Activated T-helper 1 cell treated with anti-CD3 and anti-CD28 coated beads, Interleukin-12 subunit alpha, Interleukin-12 subunit beta, Interleukin-2, Interleukin-4 antibody, amounts not matched to agents 30 ng/mL and 10 ng/mL and 1 ng/mL, durations not matched to agents 14 hours and 24 hours and 36 hours (primary cell): ENCODE measurements at regions of chr10 and their contacts with region 1.

Region 1: GRCh38 chr10:103542764-103543616 is 49.5 kb downstream of the NEURL1 start:
- DNase-seq: peak; percentile 10
- H3K4me3 Mint-ChIP-seq: peak overlapping the region; percentile 51
- H3K27ac Mint-ChIP-seq: peak overlapping the region; percentile 58
- H3K4me1 Mint-ChIP-seq: peaks cover 15% of the 10 kb centered on the region
- H3K27me3 Mint-ChIP-seq: peaks cover 23% of the 10 kb centered on the region

Region 2: DNA sequence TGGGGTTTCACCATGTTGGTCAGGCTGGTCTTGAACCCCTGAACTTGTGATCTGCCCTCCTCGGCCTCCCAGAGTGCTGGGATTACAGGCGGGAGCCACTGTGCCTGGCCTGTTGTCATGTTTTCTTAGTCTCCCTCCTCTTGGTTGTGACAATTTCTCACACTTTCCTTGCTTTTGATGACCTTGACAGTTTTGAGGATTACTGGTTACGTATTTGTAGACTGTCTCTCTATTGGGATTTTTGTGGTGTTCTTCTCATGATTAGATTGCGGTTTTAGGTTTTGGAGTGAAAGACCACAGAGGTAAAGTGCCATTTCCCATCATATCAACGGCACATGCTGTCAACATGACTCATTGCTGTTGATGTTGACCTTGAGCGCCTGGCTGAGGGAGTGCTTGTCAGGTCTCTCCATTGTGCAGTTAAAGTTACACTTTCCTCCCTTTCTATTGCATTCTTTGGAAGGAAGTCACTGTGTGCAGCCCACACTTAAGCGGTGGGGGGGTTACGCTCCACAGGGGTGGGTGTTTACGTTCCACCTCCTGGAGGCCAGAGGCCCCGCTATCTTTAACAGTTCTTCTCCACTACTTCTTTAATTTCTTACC is 38.7 kb before region 1 on chr10:
- intact Hi-C with region 1: loop called (anchors 1 kb)
- DNase-seq: peak; percentile 56
- H3K4me3 Mint-ChIP-seq: peak overlapping the region; percentile 40
- H3K27ac Mint-ChIP-seq: peak overlapping the region; percentile 77
- H3K4me1 Mint-ChIP-seq: peaks cover 53% of the 10 kb centered on the region
- H3K27me3 Mint-ChIP-seq: peaks cover 36% of the 10 kb centered on the region

Region 3: DNA sequence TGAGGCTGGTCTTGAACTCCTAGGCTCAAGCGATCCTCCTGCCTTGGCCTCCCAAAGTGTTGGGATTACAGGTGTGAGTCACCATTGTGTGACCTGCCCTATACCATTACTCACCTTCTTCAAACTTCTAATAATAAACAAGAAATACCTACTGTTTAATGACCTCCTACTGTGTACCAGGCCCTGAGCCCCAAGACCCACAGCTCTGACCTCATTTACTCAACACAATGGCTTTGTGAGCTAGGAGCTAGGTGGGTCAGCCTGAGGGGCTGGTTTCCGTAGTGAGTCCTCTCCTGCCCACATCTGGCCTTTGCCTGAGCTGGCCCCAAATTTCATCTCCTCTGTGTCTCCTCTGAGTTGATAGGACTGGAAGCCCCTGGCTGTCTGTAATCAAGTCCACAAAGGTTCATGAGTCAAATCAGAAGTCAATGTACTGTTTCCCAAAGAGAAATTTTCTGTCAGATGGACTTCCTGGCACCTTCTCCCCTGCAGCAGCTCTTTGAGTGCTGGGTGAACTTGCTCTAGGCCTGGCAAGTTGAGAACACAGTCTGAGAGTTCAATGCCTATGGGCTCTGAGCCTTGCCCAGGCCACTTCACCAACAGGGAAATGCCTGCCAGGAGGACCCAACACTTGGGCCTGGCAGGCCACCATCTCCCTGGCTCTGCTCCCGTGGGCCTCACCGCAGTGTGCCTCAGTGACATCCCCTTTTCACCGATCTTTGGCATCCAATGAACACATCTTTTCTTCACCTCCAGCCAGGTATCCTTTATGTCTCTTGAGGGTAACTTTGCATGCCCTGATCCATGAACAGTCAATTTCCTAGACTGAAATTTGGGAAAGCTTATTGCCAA is 25.5 kb before region 1 on chr10:
- intact Hi-C with region 1: loop called (anchors 2 kb)
- DNase-seq: no peak
- H3K4me3 Mint-ChIP-seq: no peak overlapping the region
- H3K27ac Mint-ChIP-seq: peak overlapping the region; percentile 56
- H3K4me1 Mint-ChIP-seq: peaks cover 29% of the 10 kb centered on the region
- H3K27me3 Mint-ChIP-seq: peaks cover 17% of the 10 kb centered on the region

Region 4: GRCh38 chr10:103554488-103555324 is 11.7 kb after region 1 on chr10:
- intact Hi-C with region 1: no loop called
- DNase-seq: peak; percentile 16
- H3K4me3 Mint-ChIP-seq: peak overlapping the region; percentile 72
- H3K27ac Mint-ChIP-seq: no peak overlapping the region
- H3K4me1 Mint-ChIP-seq: peaks cover 19% of the 10 kb centered on the region
- H3K27me3 Mint-ChIP-seq: peaks cover 16% of the 10 kb centered on the region